Activated CD4-positive, alpha-beta memory T cell treated with anti-CD3 and anti-CD28 coated beads for 36 hours (primary cell): ENCODE measurements at regions of chr20 and their contacts with region 1.

Region 1: DNA sequence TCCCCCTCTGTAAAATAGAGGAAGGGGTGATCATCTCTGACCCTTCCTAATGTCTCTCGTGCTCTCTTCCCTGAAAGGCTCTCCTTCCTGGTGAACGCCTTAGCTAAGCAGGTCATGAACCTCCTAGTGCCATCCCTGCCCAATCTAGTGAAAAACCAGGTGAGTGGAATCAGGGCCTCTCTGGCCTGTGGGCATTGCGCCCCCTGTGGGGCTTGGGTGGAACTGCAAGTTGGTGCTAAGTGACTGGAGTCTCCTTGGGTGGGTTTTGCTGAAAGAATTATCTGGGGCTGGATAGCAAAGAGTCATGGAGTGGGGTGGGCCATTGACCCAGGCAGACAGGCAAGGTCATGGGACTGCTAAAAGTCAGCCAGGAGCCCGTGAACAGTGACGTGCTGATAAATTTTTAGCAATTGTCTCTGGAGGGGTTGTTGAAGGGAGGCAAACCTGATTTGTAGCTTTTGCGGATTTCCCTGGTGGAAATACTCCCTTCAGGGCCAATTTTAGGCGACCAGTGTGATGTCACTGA is 8.9 kb downstream of the BPIFB1 start:
- DNase-seq: peak; percentile 76
- H3K4me3 Mint-ChIP-seq: no peak overlapping the region
- H3K27ac Mint-ChIP-seq: no peak overlapping the region
- H3K4me1 Mint-ChIP-seq: no peaks in the 10 kb centered on the region
- H3K27me3 Mint-ChIP-seq: no peaks in the 10 kb centered on the region

Region 2: GRCh38 chr20:33097001-33097400 is 194.9 kb before region 1 on chr20:
- CTCF ChIA-PET with region 1: interaction called, 13 read pairs
- POLR2A ChIA-PET with region 1: no interaction called
- intact Hi-C with region 1: loop called (anchors 10 kb)
- DNase-seq: no peak
- H3K4me3 Mint-ChIP-seq: no peak overlapping the region
- H3K27ac Mint-ChIP-seq: no peak overlapping the region
- H3K4me1 Mint-ChIP-seq: peaks cover 2% of the 10 kb centered on the region
- H3K27me3 Mint-ChIP-seq: no peaks in the 10 kb centered on the region

Region 3: GRCh38 chr20:33262658-33263065 is 29.2 kb before region 1 on chr20:
- CTCF ChIA-PET with region 1: interaction called, 18 read pairs
- POLR2A ChIA-PET with region 1: interaction called, 3 read pairs
- intact Hi-C with region 1: no loop called
- DNase-seq: peak; percentile 19
- H3K4me3 Mint-ChIP-seq: no peak overlapping the region
- H3K27ac Mint-ChIP-seq: no peak overlapping the region
- H3K4me1 Mint-ChIP-seq: no peaks in the 10 kb centered on the region
- H3K27me3 Mint-ChIP-seq: peaks cover 21% of the 10 kb centered on the region